SK-N-SH (cell line): ENCODE measurements at regions of chr1 and their contacts with region 1.

Region 1: DNA sequence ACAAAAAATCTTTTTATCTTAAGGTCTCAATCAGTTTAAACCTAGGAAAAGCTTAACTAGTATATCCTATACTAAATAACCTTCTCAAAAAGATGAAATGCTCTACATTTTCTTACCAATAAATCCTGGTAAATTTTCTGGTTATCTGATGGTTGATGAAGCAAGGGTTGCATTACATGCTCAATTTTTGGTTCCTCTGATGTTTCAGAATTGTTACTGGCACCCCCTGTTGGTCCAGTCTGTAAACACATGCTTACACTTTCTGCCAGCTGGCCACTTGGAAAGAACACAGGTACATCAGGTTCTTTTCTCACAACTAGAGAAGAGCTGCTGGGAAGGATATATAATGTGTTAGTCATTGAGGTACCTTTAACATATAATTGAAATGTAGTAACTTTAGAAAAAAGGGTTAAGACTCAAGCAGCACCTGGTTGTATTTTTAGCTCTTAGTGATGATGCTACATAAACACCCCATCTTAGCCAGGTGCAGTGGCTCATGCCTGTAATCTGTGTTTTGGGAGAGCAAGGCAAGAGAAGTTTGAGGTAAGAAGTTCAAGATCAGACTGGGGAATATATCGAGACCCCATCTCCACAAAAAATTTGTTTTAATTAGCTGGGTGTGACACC is 30.9 kb upstream of the TAL1 start:
- DNase-seq: peak; percentile 55
- H3K4me3 ChIP-seq: peak overlapping the region in 1 of 2 experiments; percentile 23; a peak in 1 of 4 replicates
- H3K27ac ChIP-seq: no peak overlapping the region
- H3K4me1 ChIP-seq: no peaks in the 10 kb centered on the region
- H3K27me3 ChIP-seq: no peaks in the 10 kb centered on the region
- CTCF ChIP-seq: peak; percentile 74
- EP300 ChIP-seq: no peak
- RAD21 ChIP-seq: peak; percentile 60

Region 2: GRCh38 chr1:47192458-47193384 is 70.2 kb before region 1 on chr1:
- CTCF ChIA-PET with region 1: interaction called, 50 read pairs
- POLR2A ChIA-PET with region 1: no interaction called
- DNase-seq: peak; percentile 78
- H3K4me3 ChIP-seq: no peak overlapping the region
- H3K27ac ChIP-seq: no peak overlapping the region
- H3K4me1 ChIP-seq: peaks cover 0 to 3% of the 10 kb centered on the region in 2 experiments; a peak in 1 of 4 replicates
- H3K27me3 ChIP-seq: peaks cover 5% of the 10 kb centered on the region
- CTCF ChIP-seq: peak; percentile 96
- EP300 ChIP-seq: no peak
- RAD21 ChIP-seq: peak; percentile 77

Region 3: DNA sequence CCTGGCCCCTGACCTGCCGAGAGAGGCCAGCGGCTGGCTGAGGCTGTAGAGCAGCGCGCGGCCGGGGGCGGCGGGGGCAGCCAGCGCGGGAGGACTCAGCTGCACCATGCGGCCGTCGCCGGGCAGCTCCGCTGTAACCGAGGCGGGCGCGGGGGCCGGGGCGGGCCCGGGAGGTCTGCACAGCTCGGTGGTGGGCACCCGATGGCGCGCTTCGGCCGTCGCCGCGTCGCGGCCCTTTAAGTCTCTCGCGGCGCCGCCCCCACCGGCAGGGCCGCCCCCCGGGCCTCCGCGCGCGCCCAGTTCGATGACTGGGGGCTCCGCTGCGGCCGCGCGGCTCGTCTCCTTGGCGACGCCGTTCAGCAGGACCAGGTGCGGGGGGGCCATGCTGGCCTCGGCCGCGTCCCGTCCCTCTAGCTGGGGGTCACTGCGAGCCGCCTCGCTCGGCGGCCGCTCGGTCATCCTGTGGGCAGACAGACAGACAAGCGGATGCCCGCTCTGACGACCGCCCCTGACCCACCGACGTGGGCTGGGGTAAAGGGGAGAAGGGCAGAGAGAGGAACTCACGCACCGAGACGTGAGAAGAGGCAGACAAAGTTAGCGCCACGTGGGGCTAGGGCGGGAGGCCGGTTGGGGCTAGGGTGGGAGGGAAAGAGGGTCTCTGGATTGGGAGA is 37.3 kb before region 1 on chr1:
- CTCF ChIA-PET with region 1: interaction called, 10 read pairs
- POLR2A ChIA-PET with region 1: no interaction called
- DNase-seq: peak; percentile 74
- H3K4me3 ChIP-seq: peak overlapping the region in 1 of 2 experiments; percentile 34; a peak in 2 of 4 replicates
- H3K27ac ChIP-seq: no peak overlapping the region
- H3K4me1 ChIP-seq: peaks cover 0 to 4% of the 10 kb centered on the region in 2 experiments; a peak in 1 of 4 replicates
- H3K27me3 ChIP-seq: peaks cover 99% of the 10 kb centered on the region
- CTCF ChIP-seq: no peak
- EP300 ChIP-seq: no peak
- RAD21 ChIP-seq: no peak

Region 4: DNA sequence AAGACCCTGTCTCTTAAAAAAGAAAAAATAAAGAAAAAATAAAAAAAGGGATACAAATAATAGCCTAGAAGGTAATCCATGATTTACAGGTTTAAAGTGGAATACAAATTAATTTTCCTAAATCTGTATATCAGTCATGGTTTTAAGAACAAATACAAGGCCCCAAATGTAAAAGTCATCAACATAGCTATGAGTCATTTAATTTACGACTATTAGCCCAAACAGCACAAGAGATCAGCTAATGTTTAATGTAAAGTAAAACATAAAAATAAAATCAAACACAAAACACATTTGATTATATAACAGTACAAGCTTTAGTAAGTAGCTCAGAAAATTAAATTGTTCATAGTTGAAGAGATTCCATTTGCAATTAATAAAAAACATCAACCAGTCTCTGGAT is 10.5 kb before region 1 on chr1:
- CTCF ChIA-PET with region 1: interaction called, 23 read pairs
- POLR2A ChIA-PET with region 1: no interaction called
- DNase-seq: no peak
- H3K4me3 ChIP-seq: no peak overlapping the region
- H3K27ac ChIP-seq: no peak overlapping the region
- H3K4me1 ChIP-seq: no peaks in the 10 kb centered on the region
- H3K27me3 ChIP-seq: no peaks in the 10 kb centered on the region
- CTCF ChIP-seq: no peak
- EP300 ChIP-seq: no peak
- RAD21 ChIP-seq: no peak